Psoas muscle (tissue), 8 donors: ENCODE measurements at regions of chr4 and their contacts with region 1.

Region 1: DNA sequence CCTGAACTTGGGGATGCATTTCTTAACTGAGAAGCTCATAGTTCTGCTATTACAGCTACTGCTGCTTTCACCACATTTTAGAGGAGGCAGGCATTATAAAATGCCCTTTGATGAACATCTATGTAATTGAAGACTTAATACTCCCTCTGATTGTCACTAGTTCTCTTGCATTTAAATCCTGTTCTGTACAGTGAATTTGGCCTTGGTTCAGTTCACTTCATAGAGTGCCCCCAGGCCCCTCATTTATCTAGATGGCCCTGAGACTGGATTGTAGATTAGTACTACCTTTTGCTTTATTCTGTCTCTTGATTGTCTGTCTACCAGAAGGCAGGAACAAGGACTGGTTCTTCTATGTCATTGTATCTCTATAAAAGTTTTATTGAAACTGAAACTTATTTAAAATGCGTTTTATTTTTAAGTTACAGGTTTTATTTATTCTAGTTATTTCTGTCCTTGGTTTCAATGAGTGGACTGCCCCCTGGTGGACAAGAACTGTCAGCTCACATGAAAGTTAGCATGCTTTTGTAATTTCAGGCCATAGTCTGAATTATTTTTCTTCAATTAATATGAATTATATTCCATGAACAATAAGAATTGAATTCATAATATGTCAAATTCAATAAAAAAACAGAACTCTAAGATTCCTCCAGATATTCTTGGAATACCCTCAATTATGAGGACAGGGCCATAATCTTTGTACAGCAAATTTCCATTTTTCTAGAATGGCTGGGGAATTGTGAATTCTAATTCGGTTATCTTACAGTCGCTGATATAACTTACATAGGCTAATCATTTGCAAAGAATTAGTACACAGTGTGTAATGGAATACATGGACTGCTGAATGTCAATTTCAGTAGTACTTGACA is 47.2 kb upstream of the TMEM33 start:
- DNase-seq: peak in 1 of 2 donors; percentile 46
- ATAC-seq: no peak
- H3K4me3 ChIP-seq: no peak overlapping the region
- H3K27ac ChIP-seq: no peak overlapping the region
- H3K4me1 ChIP-seq: peaks cover 6% of the 10 kb centered on the region
- H3K27me3 ChIP-seq: peaks cover 0 to 4% (median 0%) of the 10 kb centered on the region in 3 donors
- CTCF ChIP-seq: peak; percentile 88

Region 2: DNA sequence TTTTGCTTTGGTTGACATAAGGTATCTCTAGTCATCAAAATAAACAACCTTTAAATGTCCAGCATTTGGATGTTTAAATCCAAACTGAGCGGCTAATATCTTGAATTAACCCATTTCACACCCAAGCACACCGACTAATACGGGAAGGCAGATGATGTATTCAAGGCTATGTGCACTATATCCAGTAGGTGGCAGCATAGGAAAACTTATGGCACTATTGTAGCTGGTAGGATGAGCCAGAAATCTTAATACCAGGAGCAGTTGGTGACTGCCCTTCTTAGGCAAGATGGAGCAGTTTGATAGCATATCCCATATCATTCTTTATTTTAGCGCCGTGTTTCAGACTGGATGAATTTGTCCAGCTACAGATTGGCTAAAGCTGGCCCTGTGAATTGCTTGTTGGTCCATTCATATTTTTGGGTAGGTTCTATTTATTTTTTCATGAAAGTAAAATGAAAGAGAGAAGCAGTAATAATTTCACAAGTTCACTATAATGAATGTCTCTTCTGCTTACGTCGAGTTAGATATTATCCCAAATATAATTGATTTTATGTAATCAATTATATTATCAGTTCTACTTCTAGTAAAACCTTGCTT is 606.9 kb before region 1 on chr4:
- intact Hi-C with region 1: loop called in 1 of 2 experiments (anchors 2 kb)
- DNase-seq: no peak
- ATAC-seq: peak; percentile 98 to 99 (median 98)
- H3K4me3 ChIP-seq: peak overlapping the region; percentile 37
- H3K27ac ChIP-seq: no peak overlapping the region
- H3K4me1 ChIP-seq: no peaks in the 10 kb centered on the region
- H3K27me3 ChIP-seq: no peaks in the 10 kb centered on the region
- CTCF ChIP-seq: peak; percentile 93

Region 3: GRCh38 chr4:41505161-41505661 is 382.8 kb before region 1 on chr4:
- intact Hi-C with region 1: no loop called
- DNase-seq: peak; percentile 24 to 57
- ATAC-seq: peak; percentile 81 to 91 (median 86)
- H3K4me3 ChIP-seq: no peak overlapping the region
- H3K27ac ChIP-seq: no peak overlapping the region
- H3K4me1 ChIP-seq: peaks cover 9% of the 10 kb centered on the region
- H3K27me3 ChIP-seq: no peaks in the 10 kb centered on the region
- CTCF ChIP-seq: no peak

Region 4: DNA sequence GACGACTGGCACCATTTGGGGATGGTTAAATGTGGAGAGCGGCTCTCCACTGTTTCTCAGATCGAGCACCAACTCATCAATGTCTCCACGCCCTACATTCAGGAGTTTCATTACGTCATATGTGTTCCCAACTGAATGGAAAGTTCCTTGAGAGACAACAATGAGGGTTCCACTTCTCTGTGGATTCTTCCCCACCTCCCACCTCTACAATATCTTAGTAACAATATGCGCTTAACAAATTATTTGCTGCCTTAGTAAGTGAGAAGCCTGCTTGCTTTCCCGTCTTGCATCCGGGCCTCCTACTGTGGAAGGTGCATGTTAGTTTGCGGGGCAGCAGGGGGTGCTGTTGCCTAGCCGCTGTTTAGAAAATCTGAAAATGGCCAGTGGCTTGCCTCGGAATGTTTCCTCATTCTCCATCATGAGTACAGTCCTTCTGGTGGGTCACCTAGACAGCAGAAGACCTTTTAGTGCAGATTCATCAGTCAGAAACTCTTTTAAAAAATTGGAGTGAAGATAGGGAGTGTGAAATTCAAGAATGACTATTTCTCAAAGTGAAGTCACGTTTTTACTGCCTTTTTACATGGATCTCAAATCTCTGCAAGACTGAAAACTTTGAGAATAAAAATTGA is 195.2 kb before region 1 on chr4:
- intact Hi-C with region 1: loop called (anchors 2 to 5 kb)
- DNase-seq: peak; percentile 21 to 58
- ATAC-seq: peak in 3 of 4 donors; percentile 61 to 81 (median 72)
- H3K4me3 ChIP-seq: no peak overlapping the region
- H3K27ac ChIP-seq: no peak overlapping the region
- H3K4me1 ChIP-seq: no peaks in the 10 kb centered on the region
- H3K27me3 ChIP-seq: no peaks in the 10 kb centered on the region
- CTCF ChIP-seq: peak; percentile 72

Region 5: GRCh38 chr4:42167709-42168108 is 279.7 kb after region 1 on chr4:
- intact Hi-C with region 1: no loop called
- DNase-seq: no peak
- ATAC-seq: no peak
- H3K4me3 ChIP-seq: no peak overlapping the region
- H3K27ac ChIP-seq: no peak overlapping the region
- H3K4me1 ChIP-seq: no peaks in the 10 kb centered on the region
- H3K27me3 ChIP-seq: no peaks in the 10 kb centered on the region
- CTCF ChIP-seq: no peak